Mammary epithelial cell (primary cell): ENCODE measurements at regions of chr2 and their contacts with region 1.

Region 1: DNA sequence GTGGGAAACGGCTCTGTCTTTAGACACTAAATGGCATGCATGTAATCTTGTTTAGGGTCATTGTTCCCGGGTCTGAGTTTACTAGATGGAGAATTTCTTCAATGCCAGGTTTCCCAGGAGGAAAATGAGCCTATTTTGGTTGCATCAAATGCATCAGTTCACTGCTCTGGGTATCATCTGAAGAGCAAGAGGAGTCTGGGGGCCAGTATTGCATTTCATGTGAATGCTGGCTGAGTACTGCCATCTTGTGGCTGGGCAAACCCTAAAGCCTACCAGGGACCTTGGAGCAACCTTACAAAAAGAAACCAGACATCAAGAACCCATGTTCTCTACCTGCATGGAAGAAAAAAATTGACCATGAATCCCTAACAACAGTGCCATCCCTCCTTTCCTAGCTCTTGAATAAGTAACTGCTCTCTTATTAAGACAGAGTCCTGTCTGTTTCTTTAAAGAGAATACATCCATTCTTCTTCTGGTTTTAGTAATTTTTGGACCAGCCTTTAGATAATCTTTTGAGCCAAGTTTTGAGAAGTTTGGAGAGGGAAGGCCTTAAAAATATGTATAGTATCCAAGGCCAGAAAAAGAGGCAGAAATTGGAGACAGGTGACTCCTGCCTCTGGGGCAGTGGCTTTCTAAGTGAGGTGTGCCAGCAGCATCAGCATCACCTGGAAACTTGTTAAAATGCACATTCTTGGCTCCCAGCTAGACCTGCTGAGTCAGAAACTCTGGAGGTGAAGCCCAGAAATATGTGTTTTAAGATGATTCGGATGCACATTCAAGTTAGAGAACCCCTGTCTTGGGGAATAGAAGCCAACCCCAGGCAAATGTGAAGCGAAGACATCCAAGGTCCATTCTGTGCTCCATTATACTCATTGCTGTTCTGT is 261.0 kb upstream of the CXCR4 start:
- DNase-seq: peak; percentile 21
- H3K4me3 ChIP-seq: no peak overlapping the region
- H3K27ac ChIP-seq: no peak overlapping the region
- H3K4me1 ChIP-seq: peaks cover 14% of the 10 kb centered on the region
- H3K27me3 ChIP-seq: peaks cover 2% of the 10 kb centered on the region
- CTCF ChIP-seq: peak; percentile 77 to 87

Region 2: GRCh38 chr2:135818937-135819610 is 559.9 kb before region 1 on chr2:
- CTCF ChIA-PET with region 1: no interaction called
- dilution Hi-C with region 1: no loop called
- in situ Hi-C with region 1: no loop called
- intact Hi-C with region 1: loop called (anchors 1 kb)
- DNase-seq: no peak
- H3K4me3 ChIP-seq: no peak overlapping the region
- H3K27ac ChIP-seq: no peak overlapping the region
- H3K4me1 ChIP-seq: no peaks in the 10 kb centered on the region
- H3K27me3 ChIP-seq: no peaks in the 10 kb centered on the region
- CTCF ChIP-seq: peak; percentile 48 to 57

Region 3: DNA sequence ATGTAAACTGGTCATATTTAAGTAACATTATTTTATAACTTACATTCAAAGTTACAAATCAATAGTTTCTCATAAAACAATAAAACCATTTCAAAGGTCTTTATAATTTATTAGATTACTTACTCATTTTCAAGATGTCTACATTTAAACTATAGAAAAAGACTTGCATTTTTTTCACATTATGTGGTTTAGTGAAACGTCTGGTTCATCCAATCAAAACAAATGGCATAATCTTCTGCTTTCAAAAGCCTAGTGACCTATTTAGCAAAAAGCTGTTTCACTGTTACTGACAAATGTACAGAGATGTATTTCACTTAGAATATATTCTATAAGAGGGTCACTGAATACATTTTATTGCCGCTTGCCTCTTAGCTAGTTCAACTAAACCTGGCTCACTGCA is 453.4 kb before region 1 on chr2:
- CTCF ChIA-PET with region 1: no interaction called
- dilution Hi-C with region 1: no loop called
- in situ Hi-C with region 1: no loop called
- intact Hi-C with region 1: no loop called
- DNase-seq: no peak
- H3K4me3 ChIP-seq: no peak overlapping the region
- H3K27ac ChIP-seq: no peak overlapping the region
- H3K4me1 ChIP-seq: no peaks in the 10 kb centered on the region
- H3K27me3 ChIP-seq: no peaks in the 10 kb centered on the region
- CTCF ChIP-seq: no peak

Region 4: GRCh38 chr2:135985018-135985825 is 393.7 kb before region 1 on chr2 and contains the start of gene DARS1:
- CTCF ChIA-PET with region 1: no interaction called
- dilution Hi-C with region 1: no loop called
- in situ Hi-C with region 1: no loop called
- intact Hi-C with region 1: loop called (anchors 2 kb)
- DNase-seq: peak; percentile 94
- H3K4me3 ChIP-seq: peak within 1 kb of the TSS; percentile 86 to 95 (median 87)
- H3K27ac ChIP-seq: peak within 1 kb of the TSS; percentile 99
- H3K4me1 ChIP-seq: peaks cover 3% of the 10 kb centered on the region
- H3K27me3 ChIP-seq: no peaks in the 10 kb centered on the region
- CTCF ChIP-seq: no peak
- total RNA-seq, gene DARS1: 64.3 to 68.8 TPM

Region 5: GRCh38 chr2:136117909-136118818 is 260.8 kb before region 1 on chr2 and contains the start of gene CXCR4:
- CTCF ChIA-PET with region 1: no interaction called
- dilution Hi-C with region 1: no loop called
- in situ Hi-C with region 1: no loop called
- intact Hi-C with region 1: loop called (anchors 10 kb)
- DNase-seq: peak; percentile 21
- H3K4me3 ChIP-seq: peak within 1 kb of the TSS in 1 of 3 experiments; percentile 4
- H3K27ac ChIP-seq: no peak within 1 kb of the TSS
- H3K4me1 ChIP-seq: peaks cover 17% of the 10 kb centered on the region
- H3K27me3 ChIP-seq: peaks cover 49% of the 10 kb centered on the region
- CTCF ChIP-seq: peak in 1 of 2 donors; percentile 19
- total RNA-seq, gene CXCR4: not detected